B cell (primary cell): ENCODE measurements at regions of chr2 and their contacts with region 1.

Region 1: DNA sequence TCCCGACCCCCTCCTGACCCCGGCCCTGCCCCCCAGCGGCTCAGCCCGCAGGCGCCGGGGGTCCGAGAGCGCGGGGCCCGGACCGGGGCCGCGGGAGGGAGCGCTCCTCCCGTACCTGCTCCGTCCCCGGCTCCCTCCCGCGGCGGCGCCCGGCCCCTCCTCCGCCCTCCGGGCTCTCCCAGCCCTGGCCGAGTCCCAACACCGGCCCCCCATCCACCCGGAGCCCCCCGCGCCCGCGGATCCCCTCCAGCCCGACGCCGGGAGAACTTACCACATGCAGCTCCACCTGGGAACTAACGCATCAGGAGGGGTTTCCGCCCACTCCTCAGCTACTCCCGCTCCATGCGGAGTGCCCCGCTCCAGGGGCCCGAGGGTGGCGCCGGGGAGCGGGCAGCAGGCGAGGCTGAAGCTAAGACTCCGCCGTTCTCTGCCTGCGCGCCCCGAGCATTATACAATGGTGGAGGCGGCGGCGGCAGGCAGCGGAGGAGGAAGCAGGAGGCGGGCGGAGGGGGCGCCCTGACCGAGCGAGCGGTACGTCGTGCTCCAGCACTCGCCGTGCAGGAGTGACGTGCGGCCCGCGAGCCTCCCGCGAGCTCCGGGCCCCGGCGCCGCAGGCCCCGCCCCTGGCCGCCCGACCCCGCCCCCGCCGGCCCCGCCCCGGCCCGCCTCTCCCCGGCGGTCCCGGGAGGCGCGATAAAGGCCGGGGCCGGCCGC is at the start of gene SERTAD2:
- DNase-seq: peak; percentile 94
- ATAC-seq: peak; percentile 81
- H3K4me3 ChIP-seq: peak within 1 kb of the TSS; percentile 84 to 96 (median 89)
- H3K4me3 Mint-ChIP-seq: peak within 1 kb of the TSS; percentile 93
- H3K27ac ChIP-seq: peak within 1 kb of the TSS; percentile 92 to 93
- H3K27ac Mint-ChIP-seq: peak within 1 kb of the TSS; percentile 98
- H3K4me1 ChIP-seq: peaks cover 72 to 77% of the 10 kb centered on the region in 2 donors
- H3K4me1 Mint-ChIP-seq: peaks cover 79% of the 10 kb centered on the region
- H3K27me3 ChIP-seq: no peaks in the 10 kb centered on the region
- H3K27me3 Mint-ChIP-seq: no peaks in the 10 kb centered on the region
- CTCF ChIP-seq: peak; percentile 20
- total RNA-seq, gene SERTAD2: 49.5 and 51.2 TPM in 2 replicates

Region 2: DNA sequence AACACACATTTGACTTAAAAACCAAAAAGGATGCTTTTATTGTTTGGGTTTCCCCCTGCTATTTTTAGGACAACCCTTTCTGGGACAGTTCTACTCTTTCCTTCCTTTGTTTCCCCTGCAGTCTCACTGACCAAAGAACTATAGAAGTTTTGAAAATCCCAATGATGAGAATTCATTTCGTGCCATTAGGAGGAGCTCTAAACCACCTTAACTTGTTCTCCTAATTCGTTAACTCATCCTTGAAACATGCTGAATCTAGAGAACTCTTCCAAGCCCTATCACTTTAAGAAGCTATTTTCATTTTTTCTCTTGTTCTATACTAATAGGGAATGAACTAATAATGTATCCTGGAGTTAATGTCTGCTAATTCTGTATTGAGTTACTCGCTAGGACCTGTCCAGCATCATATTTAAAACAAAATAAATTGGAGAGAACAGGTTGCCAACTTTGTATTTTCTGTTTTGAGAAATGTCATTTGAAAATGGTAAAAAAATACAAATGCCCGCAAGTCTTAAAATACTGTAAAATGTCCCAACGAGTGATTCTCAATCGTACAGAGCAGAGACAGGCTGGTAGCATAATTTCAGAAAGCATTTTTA is 66.5 kb before region 1 on chr2:
- CTCF ChIA-PET with region 1: interaction called, 15 read pairs
- POLR2A ChIA-PET with region 1: interaction called, 3 read pairs
- intact Hi-C with region 1: no loop called
- DNase-seq: peak; percentile 72
- ATAC-seq: peak; percentile 58
- H3K4me3 ChIP-seq: no peak overlapping the region
- H3K4me3 Mint-ChIP-seq: no peak overlapping the region
- H3K27ac ChIP-seq: no peak overlapping the region
- H3K27ac Mint-ChIP-seq: peak overlapping the region; percentile 32
- H3K4me1 ChIP-seq: peaks cover 0 to 4% of the 10 kb centered on the region in 2 donors
- H3K4me1 Mint-ChIP-seq: peaks cover 14% of the 10 kb centered on the region
- H3K27me3 ChIP-seq: no peaks in the 10 kb centered on the region
- H3K27me3 Mint-ChIP-seq: no peaks in the 10 kb centered on the region
- CTCF ChIP-seq: peak; percentile 88

Region 3: DNA sequence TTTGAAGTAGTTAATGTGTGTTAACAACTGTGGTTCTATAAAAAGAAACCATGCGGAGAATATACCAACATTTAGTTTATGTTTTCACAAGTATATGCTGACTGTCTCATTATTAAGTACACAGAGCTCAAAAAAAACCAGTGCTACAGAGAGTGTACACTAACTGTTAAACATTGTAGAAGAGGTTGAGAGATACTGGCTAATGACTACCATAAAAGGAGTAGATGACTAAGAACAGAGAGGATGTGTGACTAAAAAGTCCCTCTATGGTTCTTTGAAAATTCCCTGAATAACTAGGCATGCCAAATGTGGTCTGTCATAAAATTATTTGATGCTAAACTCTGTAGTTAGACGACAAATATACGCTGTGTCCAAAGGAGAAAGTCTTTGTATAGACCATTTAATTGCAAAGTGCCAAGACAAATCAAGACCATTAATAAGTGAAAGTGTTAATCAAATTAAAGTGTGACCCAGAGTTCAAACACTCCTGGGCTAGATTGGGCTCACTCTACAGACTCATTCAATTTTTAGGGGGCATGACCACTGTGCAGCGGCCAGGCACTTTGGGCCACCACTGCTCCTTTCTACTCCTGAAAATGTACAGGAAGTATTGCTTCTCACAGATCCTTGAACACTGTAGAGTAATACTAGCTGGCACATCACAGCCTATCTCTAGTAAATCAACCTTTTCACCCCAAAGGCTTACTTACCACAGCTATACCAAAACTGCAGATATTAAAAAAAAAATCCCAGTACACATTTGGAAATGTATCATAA is 45.4 kb after region 1 on chr2:
- CTCF ChIA-PET with region 1: interaction called, 9 read pairs
- POLR2A ChIA-PET with region 1: interaction called, 3 read pairs
- intact Hi-C with region 1: loop called (anchors 2 kb)
- DNase-seq: peak; percentile 27
- ATAC-seq: peak; percentile 51
- H3K4me3 ChIP-seq: peak overlapping the region in 1 of 5 experiments; percentile 36
- H3K4me3 Mint-ChIP-seq: peak overlapping the region; percentile 37
- H3K27ac ChIP-seq: no peak overlapping the region
- H3K27ac Mint-ChIP-seq: peak overlapping the region; percentile 51
- H3K4me1 ChIP-seq: peaks cover 22 to 24% of the 10 kb centered on the region in 2 donors
- H3K4me1 Mint-ChIP-seq: peaks cover 40% of the 10 kb centered on the region
- H3K27me3 ChIP-seq: no peaks in the 10 kb centered on the region
- H3K27me3 Mint-ChIP-seq: no peaks in the 10 kb centered on the region
- CTCF ChIP-seq: no peak

Region 4: DNA sequence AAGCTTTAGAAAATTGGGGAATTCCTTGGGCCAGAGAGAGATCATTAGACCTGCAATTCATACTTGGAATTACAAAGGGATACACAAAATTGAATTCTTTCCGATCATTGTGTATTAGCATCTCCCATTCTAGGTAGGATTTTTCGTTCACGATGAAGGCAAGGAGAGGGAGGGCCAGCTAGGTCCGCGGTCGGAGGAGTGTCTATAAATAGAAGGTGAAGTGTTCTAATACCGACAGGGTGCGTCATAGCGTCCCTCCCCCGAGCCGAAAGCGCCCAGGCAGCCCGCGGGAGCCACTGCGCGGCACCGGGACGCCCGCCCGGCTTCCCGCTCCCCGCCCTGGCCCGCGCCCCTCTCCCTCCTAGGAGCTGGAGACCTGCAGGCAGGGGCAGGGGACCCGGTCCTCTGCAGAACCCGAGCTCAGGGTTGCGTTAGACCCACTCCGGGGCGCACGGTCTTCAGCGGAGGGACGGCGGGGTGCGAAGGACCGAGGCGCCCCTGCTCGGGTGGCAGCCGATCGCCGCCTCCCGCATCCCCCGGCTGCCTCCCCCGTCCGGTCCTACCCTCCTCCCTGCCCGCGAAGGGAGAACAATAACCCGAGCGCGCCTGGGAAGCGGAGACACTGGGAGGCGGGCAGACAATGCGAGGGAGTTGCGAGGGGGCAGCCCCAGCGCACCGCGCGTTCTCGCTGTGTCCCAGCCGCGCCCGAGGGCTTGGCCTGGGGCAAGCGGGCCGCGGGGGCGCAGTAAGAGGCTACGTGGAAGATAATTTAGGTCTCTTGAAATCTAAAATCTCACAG is 114.4 kb after region 1 on chr2:
- CTCF ChIA-PET with region 1: interaction called, 16 read pairs
- POLR2A ChIA-PET with region 1: interaction called, 14 read pairs
- intact Hi-C with region 1: loop called (anchors 1 kb)
- DNase-seq: peak; percentile 88
- ATAC-seq: peak; percentile 79
- H3K4me3 ChIP-seq: peak overlapping the region; percentile 60 to 99 (median 87)
- H3K4me3 Mint-ChIP-seq: peak overlapping the region; percentile 94
- H3K27ac ChIP-seq: peak overlapping the region; percentile 82 to 95
- H3K27ac Mint-ChIP-seq: peak overlapping the region; percentile 97
- H3K4me1 ChIP-seq: peaks cover 13% of the 10 kb centered on the region in 2 donors
- H3K4me1 Mint-ChIP-seq: peaks cover 24% of the 10 kb centered on the region
- H3K27me3 ChIP-seq: no peaks in the 10 kb centered on the region
- H3K27me3 Mint-ChIP-seq: no peaks in the 10 kb centered on the region
- CTCF ChIP-seq: no peak

Region 5: DNA sequence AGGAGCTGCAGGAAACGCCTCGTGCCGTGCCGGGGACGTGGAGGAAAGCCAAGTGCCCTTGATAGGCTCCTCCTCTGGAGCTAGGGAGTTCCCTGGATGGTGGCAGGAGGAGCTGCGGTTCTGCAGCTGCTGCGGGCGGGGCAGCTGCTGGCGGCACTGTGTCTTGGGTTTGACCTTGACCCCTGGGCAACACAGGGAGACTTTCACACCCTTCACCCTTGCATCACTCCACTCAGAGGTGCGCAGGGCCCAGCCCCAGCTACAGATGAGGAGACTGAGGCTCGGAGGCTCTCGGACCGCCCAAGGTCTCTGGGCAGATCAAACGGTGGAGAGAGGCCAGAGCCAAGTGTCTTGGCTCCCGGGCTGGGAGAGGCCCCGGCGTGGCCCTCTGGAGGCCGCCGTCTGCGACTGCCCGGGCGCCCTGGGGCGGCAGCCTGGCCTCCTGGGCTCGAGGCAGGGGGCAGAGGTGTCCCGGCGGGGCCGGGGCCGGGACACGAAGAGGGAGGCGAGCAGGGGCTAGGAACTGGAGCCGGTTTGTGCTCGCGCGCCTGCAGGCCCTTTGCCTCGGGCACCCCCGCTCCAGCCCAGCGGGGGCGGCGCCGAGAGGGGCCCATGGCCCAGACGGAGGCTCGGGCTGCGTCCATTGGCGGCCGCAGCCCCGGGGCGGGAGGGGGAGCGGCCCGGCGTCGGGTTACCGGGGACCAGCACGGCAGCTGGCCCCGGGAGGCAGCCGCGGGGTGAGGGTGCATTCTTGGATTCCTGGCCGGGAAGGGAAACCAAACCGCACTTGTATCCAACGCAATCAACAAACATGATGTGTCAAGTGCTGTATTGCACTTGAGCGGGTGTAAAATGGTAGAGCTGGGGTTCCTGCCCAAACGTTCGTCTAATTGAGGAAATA is 206.1 kb after region 1 on chr2:
- CTCF ChIA-PET with region 1: interaction called, 138 read pairs
- POLR2A ChIA-PET with region 1: interaction called, 42 read pairs
- intact Hi-C with region 1: no loop called
- DNase-seq: peak; percentile 69
- ATAC-seq: peak; percentile 11
- H3K4me3 ChIP-seq: peak overlapping the region; percentile 61 to 79 (median 67)
- H3K4me3 Mint-ChIP-seq: peak overlapping the region; percentile 79
- H3K27ac ChIP-seq: peak overlapping the region; percentile 91 to 93
- H3K27ac Mint-ChIP-seq: no peak overlapping the region
- H3K4me1 ChIP-seq: peaks cover 76 to 80% of the 10 kb centered on the region in 2 donors
- H3K4me1 Mint-ChIP-seq: peaks cover 28% of the 10 kb centered on the region
- H3K27me3 ChIP-seq: no peaks in the 10 kb centered on the region
- H3K27me3 Mint-ChIP-seq: no peaks in the 10 kb centered on the region
- CTCF ChIP-seq: no peak

Region 6: GRCh38 chr2:64932371-64933216 is 279.1 kb after region 1 on chr2:
- CTCF ChIA-PET with region 1: no interaction called
- POLR2A ChIA-PET with region 1: interaction called, 3 read pairs
- intact Hi-C with region 1: loop called (anchors 5 kb)
- DNase-seq: peak; percentile 68
- ATAC-seq: peak; percentile 75
- H3K4me3 ChIP-seq: peak overlapping the region; percentile 51 to 66 (median 59)
- H3K4me3 Mint-ChIP-seq: peak overlapping the region; percentile 83
- H3K27ac ChIP-seq: peak overlapping the region; percentile 74 to 87
- H3K27ac Mint-ChIP-seq: peak overlapping the region; percentile 83
- H3K4me1 ChIP-seq: peaks cover 92 to 95% of the 10 kb centered on the region in 2 donors
- H3K4me1 Mint-ChIP-seq: peaks cover 88% of the 10 kb centered on the region
- H3K27me3 ChIP-seq: no peaks in the 10 kb centered on the region
- H3K27me3 Mint-ChIP-seq: no peaks in the 10 kb centered on the region
- CTCF ChIP-seq: no peak

Region 7: GRCh38 chr2:65802298-65802942 is 1148.9 kb after region 1 on chr2:
- CTCF ChIA-PET with region 1: no interaction called
- POLR2A ChIA-PET with region 1: no interaction called
- intact Hi-C with region 1: no loop called
- DNase-seq: no peak
- ATAC-seq: no peak
- H3K4me3 ChIP-seq: no peak overlapping the region
- H3K4me3 Mint-ChIP-seq: no peak overlapping the region
- H3K27ac ChIP-seq: no peak overlapping the region
- H3K27ac Mint-ChIP-seq: no peak overlapping the region
- H3K4me1 ChIP-seq: no peaks in the 10 kb centered on the region
- H3K4me1 Mint-ChIP-seq: no peaks in the 10 kb centered on the region
- H3K27me3 ChIP-seq: peaks cover 0 to 4% (median 0%) of the 10 kb centered on the region in 4 experiments
- H3K27me3 Mint-ChIP-seq: peaks cover 29% of the 10 kb centered on the region
- CTCF ChIP-seq: no peak